Endothelial cell of umbilical vein (primary cell): ENCODE measurements at regions of chr16 and their contacts with region 1.

Region 1: GRCh38 chr16:67521095-67521804 is 7.4 kb upstream of the RIPOR1 start:
- DNase-seq: peak; percentile 97
- H3K4me3 ChIP-seq: peak overlapping the region in 2 of 3 experiments; percentile 30 to 45
- H3K27ac ChIP-seq: peak overlapping the region; percentile 89
- H3K4me1 ChIP-seq: peaks cover 11% of the 10 kb centered on the region
- H3K27me3 ChIP-seq: no peaks in the 10 kb centered on the region
- CTCF ChIP-seq: peak; percentile 83 to 100
- POLR2A ChIP-seq: peak; percentile 68

Region 2: DNA sequence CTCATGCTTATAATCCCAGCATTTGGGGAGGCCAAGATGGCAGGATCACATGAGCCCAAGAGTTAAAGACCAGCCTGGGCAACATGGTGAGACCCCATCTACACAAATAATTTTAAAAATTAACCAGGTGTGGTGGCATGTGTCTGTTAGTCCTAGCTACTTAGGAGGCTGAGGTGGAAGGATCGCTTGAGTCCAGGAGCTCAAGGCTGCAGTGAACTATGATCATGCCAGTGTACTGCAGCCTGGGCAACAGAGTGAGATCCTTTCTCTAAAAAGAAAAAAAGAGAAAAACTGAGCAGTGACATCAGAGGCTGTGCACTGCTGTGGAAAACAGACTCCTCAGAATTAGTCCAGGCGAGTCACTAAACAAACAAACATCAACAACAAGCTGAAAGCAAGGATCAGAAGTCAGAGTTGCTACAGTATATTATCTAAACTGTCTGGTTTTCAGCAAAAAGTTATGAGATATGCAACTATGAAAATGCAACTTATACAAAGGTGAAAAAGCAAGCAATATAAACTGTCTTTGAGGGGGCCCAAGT is 453.0 kb before region 1 on chr16:
- CTCF ChIA-PET with region 1: no interaction called
- POLR2A ChIA-PET with region 1: no interaction called
- dilution Hi-C with region 1: no loop called
- intact Hi-C with region 1: no loop called
- DNase-seq: no peak
- H3K4me3 ChIP-seq: no peak overlapping the region
- H3K27ac ChIP-seq: no peak overlapping the region
- H3K4me1 ChIP-seq: no peaks in the 10 kb centered on the region
- H3K27me3 ChIP-seq: no peaks in the 10 kb centered on the region
- CTCF ChIP-seq: no peak
- POLR2A ChIP-seq: no peak

Region 3: GRCh38 chr16:67490335-67491096 is 30.7 kb before region 1 on chr16:
- CTCF ChIA-PET with region 1: interaction called, 247 read pairs
- POLR2A ChIA-PET with region 1: no interaction called
- dilution Hi-C with region 1: no loop called
- intact Hi-C with region 1: no loop called
- DNase-seq: no peak
- H3K4me3 ChIP-seq: no peak overlapping the region
- H3K27ac ChIP-seq: no peak overlapping the region
- H3K4me1 ChIP-seq: peaks cover 13% of the 10 kb centered on the region
- H3K27me3 ChIP-seq: no peaks in the 10 kb centered on the region
- CTCF ChIP-seq: no peak
- POLR2A ChIP-seq: no peak

Region 4: DNA sequence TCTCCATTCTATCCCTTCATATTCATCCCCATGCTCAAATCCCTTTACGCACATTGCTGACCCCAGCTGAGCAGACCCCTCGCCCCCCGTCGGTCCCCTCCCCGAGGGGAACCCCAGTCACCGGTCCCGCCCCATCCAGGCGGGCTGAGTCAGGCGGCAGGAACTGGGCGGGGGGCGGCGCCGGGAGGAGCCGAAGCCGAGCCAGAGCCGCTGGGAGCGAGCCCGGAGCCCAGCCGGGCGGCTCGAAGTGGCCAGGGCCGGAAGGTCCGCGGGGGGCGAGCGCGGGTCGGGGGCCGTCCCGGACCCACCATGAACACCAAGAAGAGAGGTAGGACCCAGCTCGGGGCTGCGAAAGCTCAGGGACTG is 16.0 kb after region 1 on chr16:
- CTCF ChIA-PET with region 1: interaction called, 246 read pairs
- POLR2A ChIA-PET with region 1: interaction called, 9 read pairs
- dilution Hi-C with region 1: no loop called
- intact Hi-C with region 1: loop called (anchors 1 kb)
- DNase-seq: peak; percentile 79
- H3K4me3 ChIP-seq: peak overlapping the region; percentile 73 to 89 (median 88)
- H3K27ac ChIP-seq: peak overlapping the region; percentile 93
- H3K4me1 ChIP-seq: peaks cover 24% of the 10 kb centered on the region
- H3K27me3 ChIP-seq: no peaks in the 10 kb centered on the region
- CTCF ChIP-seq: no peak
- POLR2A ChIP-seq: peak; percentile 80

Region 5: DNA sequence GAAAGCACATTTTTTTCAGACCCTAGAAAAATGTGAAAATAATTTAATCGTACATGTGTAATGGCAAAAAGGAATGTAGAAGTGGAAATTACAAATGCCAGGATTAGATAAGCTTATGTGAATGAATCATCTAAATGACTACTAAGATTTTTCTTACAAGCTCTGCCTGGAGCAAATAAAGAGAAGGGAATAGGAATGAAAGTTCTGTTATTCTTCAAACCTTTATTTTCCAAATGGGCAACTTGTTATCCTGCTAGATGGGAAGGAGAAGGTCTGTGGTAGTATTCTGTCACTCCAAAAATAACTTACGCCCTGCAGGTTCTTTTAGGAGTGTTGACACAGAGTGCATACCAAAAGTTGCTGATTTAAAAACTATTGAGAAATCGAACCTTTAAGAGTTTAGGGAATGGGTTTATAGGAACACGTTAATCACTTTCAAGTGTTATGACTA is 50.8 kb after region 1 on chr16:
- CTCF ChIA-PET with region 1: interaction called, 17 read pairs
- POLR2A ChIA-PET with region 1: no interaction called
- dilution Hi-C with region 1: no loop called
- intact Hi-C with region 1: no loop called
- DNase-seq: peak; percentile 68
- H3K4me3 ChIP-seq: no peak overlapping the region
- H3K27ac ChIP-seq: peak overlapping the region; percentile 84
- H3K4me1 ChIP-seq: peaks cover 20% of the 10 kb centered on the region
- H3K27me3 ChIP-seq: no peaks in the 10 kb centered on the region
- CTCF ChIP-seq: no peak
- POLR2A ChIP-seq: no peak

Region 6: DNA sequence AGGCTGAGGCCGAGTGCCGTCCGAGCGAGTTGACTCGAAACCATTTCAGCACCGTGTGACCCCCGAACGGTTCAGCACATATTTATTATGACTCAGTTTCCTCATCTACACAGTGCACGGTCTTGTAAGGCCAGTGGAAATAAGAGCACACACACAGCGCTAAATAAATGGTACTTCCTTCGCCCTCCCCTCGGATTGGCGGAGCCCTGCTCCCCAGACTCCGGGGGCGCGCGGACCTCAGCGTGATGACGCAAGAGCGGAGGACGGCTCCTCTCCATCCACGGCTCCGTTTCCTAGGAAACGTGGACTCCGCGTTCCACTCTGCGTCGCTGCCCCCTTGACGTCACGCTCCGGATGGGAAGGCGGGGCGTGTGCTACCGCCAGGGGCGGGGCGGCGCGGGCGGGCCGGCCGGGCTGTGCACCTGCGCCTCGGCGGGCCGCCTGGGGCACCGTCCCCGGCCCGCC is 139.3 kb after region 1 on chr16 and contains the start of gene PARD6A:
- CTCF ChIA-PET with region 1: interaction called, 163 read pairs
- POLR2A ChIA-PET with region 1: interaction called, 3 read pairs
- dilution Hi-C with region 1: no loop called
- intact Hi-C with region 1: no loop called
- DNase-seq: peak; percentile 94
- H3K4me3 ChIP-seq: peak within 1 kb of the TSS; percentile 32 to 70 (median 64)
- H3K27ac ChIP-seq: peak within 1 kb of the TSS; percentile 44
- H3K4me1 ChIP-seq: peaks cover 9% of the 10 kb centered on the region
- H3K27me3 ChIP-seq: no peaks in the 10 kb centered on the region
- CTCF ChIP-seq: no peak
- POLR2A ChIP-seq: no peak
- total RNA-seq, gene PARD6A: 1.3 and 1.7 TPM in 2 replicates

Region 7: DNA sequence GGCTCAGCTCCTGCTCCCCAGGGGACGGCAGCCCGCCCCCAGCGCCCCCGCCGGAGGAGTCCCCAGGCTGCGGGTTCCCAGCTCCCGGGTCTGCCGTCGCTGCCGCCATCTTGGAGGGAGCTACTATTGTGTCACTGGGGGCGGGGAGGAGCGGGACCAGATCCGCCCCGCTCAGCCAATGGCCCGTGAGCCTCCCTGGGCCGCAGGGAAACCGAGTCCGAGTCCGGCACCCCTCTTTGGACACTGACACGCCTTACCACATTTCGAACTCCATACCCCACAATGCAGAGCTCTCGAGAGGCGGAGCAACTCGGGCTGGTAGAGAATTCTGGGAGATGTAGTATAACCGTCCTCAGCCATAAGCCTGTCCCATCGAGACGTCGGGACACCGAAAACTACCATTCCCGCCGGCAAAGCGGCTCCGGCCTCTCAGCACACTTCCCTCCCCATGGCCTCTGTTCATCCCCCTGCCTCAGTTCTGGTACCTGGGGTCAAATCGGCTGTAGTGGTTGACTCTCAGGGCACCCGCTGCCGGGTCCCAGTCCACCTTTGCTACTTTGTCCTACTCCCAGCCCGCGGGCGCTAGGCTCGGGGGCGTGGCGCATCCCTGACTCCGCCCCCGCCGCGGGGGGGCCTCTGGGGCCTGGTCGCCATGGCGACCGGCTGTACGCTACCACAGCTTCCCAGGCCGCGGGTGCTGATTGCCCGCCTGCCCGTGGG is 285.3 kb after region 1 on chr16 and contains the starts of genes RANBP10 and TSNAXIP1:
- CTCF ChIA-PET with region 1: interaction called, 13 read pairs
- POLR2A ChIA-PET with region 1: no interaction called
- dilution Hi-C with region 1: no loop called
- intact Hi-C with region 1: loop called (anchors 10 kb)
- DNase-seq: peak; percentile 100
- H3K4me3 ChIP-seq: peak within 1 kb of the TSS; percentile 71 to 90 (median 81)
- H3K27ac ChIP-seq: peak within 1 kb of the TSS; percentile 59
- H3K4me1 ChIP-seq: peaks cover 11% of the 10 kb centered on the region
- H3K27me3 ChIP-seq: no peaks in the 10 kb centered on the region
- CTCF ChIP-seq: no peak
- POLR2A ChIP-seq: peak; percentile 96
- total RNA-seq, gene RANBP10: 20.6 and 25.6 TPM in 2 replicates
- total RNA-seq, gene TSNAXIP1: 0.95 and 1.0 TPM in 2 replicates